IMR-90 (cell line): ENCODE measurements at regions of chr7 and their contacts with region 1.

Region 1: GRCh38 chr7:133983685-133984419 is 143.3 kb upstream of the LRGUK start:
- DNase-seq: no peak
- ATAC-seq: no peak
- H3K4me3 ChIP-seq: no peak overlapping the region
- H3K27ac ChIP-seq: no peak overlapping the region
- H3K4me1 ChIP-seq: no peaks in the 10 kb centered on the region
- H3K27me3 ChIP-seq: no peaks in the 10 kb centered on the region
- CTCF ChIP-seq: no peak
- POLR2A ChIP-seq: no peak
- RAD21 ChIP-seq: no peak

Region 2: GRCh38 chr7:133452577-133452976 is 531.3 kb before region 1 on chr7:
- CTCF ChIA-PET with region 1: no interaction called
- POLR2A ChIA-PET with region 1: no interaction called
- dilution Hi-C with region 1: no loop called
- in situ Hi-C with region 1: no loop called
- intact Hi-C with region 1: loop called (anchors 10 kb)
- DNase-seq: peak; percentile 39
- ATAC-seq: no peak
- H3K4me3 ChIP-seq: no peak overlapping the region
- H3K27ac ChIP-seq: no peak overlapping the region; the same call in 1 of the 2 replicates
- H3K4me1 ChIP-seq: peaks cover 2% of the 10 kb centered on the region
- H3K27me3 ChIP-seq: no peaks in the 10 kb centered on the region
- CTCF ChIP-seq: no peak
- POLR2A ChIP-seq: no peak
- RAD21 ChIP-seq: no peak

Region 3: GRCh38 chr7:134004829-134005505 is 21.1 kb after region 1 on chr7:
- CTCF ChIA-PET with region 1: no interaction called
- POLR2A ChIA-PET with region 1: no interaction called
- dilution Hi-C with region 1: no loop called
- in situ Hi-C with region 1: no loop called
- intact Hi-C with region 1: no loop called
- DNase-seq: no peak
- ATAC-seq: no peak
- H3K4me3 ChIP-seq: no peak overlapping the region
- H3K27ac ChIP-seq: no peak overlapping the region
- H3K4me1 ChIP-seq: no peaks in the 10 kb centered on the region
- H3K27me3 ChIP-seq: no peaks in the 10 kb centered on the region
- CTCF ChIP-seq: no peak
- POLR2A ChIP-seq: no peak
- RAD21 ChIP-seq: no peak

Region 4: DNA sequence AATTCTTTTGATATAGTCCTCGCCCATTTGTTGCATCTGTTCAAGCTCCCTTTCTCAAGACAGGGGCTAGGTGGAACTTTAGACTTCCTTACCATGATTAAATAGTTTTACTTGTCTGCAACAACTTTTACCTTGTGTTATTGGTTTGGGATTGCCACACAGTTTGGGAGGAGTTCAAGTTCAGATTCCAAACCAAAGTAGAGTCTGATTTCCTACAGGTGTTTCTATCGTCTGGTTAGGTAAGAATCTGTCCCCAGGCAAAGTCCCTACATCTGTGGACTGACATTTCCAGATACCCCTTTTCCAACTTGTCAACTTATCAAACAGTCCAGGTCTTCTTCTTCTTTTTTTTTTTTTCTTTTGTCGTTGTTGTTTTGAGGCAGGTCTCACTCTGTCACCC is 236.4 kb after region 1 on chr7:
- CTCF ChIA-PET with region 1: no interaction called
- POLR2A ChIA-PET with region 1: no interaction called
- dilution Hi-C with region 1: no loop called
- in situ Hi-C with region 1: no loop called
- intact Hi-C with region 1: no loop called
- DNase-seq: no peak
- ATAC-seq: no peak
- H3K4me3 ChIP-seq: no peak overlapping the region
- H3K27ac ChIP-seq: no peak overlapping the region
- H3K4me1 ChIP-seq: no peaks in the 10 kb centered on the region
- H3K27me3 ChIP-seq: peaks cover 1% of the 10 kb centered on the region; the same call in 1 of the 2 replicates
- CTCF ChIP-seq: no peak
- POLR2A ChIP-seq: no peak
- RAD21 ChIP-seq: no peak